PC-3 (cell line): ENCODE measurements at regions of chr17 and their contacts with region 1.

Region 1: DNA sequence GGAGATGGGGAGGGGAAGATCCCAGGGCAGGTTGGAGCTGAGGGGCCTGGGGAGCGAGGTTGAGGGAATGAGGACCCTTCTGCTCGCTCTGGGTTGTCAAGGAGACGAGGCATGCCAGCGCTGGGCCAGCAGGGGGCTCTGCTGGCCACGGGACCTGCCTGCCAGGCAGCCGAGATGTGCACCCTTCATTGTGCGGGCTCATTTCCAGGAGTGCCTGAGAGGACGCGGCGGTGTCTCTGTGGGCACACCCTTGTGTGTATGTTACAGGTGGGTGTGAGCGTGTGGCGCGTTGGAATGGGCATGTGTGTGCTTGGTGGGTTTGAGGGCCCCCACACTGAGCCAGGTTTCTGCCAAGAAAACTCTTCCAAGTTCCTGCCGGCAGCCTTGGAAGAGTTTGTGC is 15.9 kb downstream of the ARHGAP23 start:
- DNase-seq: peak; percentile 69
- ATAC-seq: peak; percentile 90
- H3K4me3 ChIP-seq: no peak overlapping the region
- H3K27ac ChIP-seq: no peak overlapping the region
- H3K4me1 ChIP-seq: no peaks in the 10 kb centered on the region
- H3K27me3 ChIP-seq: no peaks in the 10 kb centered on the region
- CTCF ChIP-seq: peak; percentile 85

Region 2: GRCh38 chr17:38485146-38485468 is 41.0 kb after region 1 on chr17:
- CTCF ChIA-PET with region 1: no interaction called
- POLR2A ChIA-PET with region 1: no interaction called
- intact Hi-C with region 1: loop called (anchors 2 kb)
- DNase-seq: no peak
- ATAC-seq: no peak
- H3K4me3 ChIP-seq: no peak overlapping the region
- H3K27ac ChIP-seq: no peak overlapping the region
- H3K4me1 ChIP-seq: no peaks in the 10 kb centered on the region
- H3K27me3 ChIP-seq: no peaks in the 10 kb centered on the region
- CTCF ChIP-seq: no peak